Activated CD4-positive, alpha-beta memory T cell treated with anti-CD3 and anti-CD28 coated beads for 36 hours (primary cell): ENCODE measurements at regions of chr14 and their contacts with region 1.

Region 1: DNA sequence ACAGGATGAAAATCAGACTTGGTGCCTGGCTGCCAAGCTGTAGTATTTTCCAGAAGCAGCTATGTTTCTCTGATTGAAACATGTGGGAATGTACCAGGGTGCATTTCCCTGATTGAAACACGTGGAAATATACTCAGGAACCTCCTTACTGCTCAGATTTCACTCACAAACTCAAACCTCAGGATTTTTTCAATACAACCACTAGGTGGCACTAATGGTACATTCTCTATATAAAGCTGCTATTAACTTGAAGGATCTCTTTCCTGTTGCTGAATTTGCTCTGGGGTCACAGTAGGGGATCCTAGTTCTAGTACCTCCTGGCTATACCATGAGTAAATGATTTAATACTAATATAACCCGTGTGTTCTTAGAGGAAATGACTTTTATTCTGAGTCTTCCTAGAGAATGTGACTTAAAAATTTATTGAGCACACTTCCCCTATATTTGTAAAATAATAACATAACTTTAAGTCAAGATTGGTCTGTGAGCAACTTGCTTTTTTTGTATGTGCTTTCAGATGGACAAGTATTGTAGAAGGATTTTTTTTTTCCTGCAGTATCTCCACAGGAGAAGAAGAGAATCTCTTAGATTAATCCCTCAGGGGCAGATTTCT is 173.8 kb upstream of the MIS18BP1 start:
- DNase-seq: no peak
- H3K4me3 Mint-ChIP-seq: no peak overlapping the region
- H3K27ac Mint-ChIP-seq: no peak overlapping the region
- H3K4me1 Mint-ChIP-seq: no peaks in the 10 kb centered on the region
- H3K27me3 Mint-ChIP-seq: no peaks in the 10 kb centered on the region

Region 2: DNA sequence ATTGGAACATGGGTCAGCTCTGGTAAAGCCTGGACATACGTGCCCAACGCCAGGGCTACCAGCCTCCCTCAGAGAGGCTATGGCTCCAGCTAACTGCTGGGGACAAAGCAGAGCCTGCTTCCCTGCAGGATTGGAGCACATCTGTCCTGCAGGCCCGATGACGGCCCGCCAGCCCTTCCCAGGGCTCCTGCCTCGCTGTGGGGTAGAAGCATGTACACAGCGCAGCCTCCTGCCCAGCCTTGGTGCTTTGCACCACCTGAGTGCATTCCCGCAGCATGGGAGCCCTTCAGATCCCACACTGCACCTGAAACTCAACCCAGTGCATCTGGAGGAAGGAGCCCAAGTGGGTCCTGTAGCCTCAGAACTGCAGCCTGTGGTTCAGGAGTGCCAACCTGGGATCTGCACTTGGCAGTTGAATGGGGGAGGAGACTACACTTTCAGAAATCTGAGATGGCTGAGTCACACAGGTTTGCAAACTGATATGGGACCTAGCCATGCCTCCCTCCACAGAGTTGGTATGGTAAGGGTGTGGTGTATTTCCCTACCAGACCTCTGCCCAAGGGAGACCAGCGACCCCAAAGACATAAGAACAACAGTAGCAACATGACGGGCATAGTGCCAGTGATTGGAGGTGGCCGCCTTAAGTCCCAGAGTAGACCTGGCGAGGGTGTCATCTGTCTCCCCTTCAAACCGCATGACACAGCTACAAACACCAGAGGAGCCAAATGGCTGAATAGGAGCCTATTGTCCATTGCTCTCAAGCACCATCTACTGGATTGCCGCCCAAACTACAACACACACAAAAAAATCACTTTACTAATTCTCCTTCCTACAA is 100.2 kb after region 1 on chr14:
- CTCF ChIA-PET with region 1: no interaction called
- POLR2A ChIA-PET with region 1: no interaction called
- intact Hi-C with region 1: loop called (anchors 2 kb)
- DNase-seq: no peak
- H3K4me3 Mint-ChIP-seq: no peak overlapping the region
- H3K27ac Mint-ChIP-seq: no peak overlapping the region
- H3K4me1 Mint-ChIP-seq: no peaks in the 10 kb centered on the region
- H3K27me3 Mint-ChIP-seq: no peaks in the 10 kb centered on the region

Region 3: DNA sequence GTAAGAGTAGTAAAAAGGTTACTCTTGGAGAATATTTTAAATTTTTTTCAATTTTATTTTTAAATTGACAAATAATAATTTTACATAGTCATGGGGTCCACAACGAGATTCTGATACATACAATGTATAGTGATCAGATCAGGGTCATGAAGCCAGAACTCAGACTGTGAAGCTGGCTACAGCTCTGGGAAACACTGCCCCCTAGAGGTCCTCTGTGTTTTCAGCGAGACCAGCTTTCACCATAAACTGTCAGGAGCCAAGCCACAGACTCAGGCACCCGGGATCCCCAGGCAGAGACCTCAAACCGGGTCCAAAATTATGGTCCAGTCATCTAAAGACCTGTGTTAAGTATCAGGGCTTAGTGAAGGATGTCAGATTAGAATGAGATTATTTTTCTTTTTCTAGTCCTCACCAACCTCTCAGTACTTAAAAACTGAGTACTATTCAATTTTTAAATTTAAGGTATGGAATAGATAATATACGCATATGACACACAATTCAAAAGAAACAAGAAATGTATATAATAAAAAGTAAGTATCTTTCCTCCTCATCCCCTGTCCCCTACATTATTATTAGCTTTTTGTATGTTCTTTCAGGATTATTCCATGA is 1851.6 kb after region 1 on chr14:
- CTCF ChIA-PET with region 1: no interaction called
- POLR2A ChIA-PET with region 1: no interaction called
- intact Hi-C with region 1: loop called (anchors 5 kb)
- DNase-seq: peak; percentile 48
- H3K4me3 Mint-ChIP-seq: no peak overlapping the region
- H3K27ac Mint-ChIP-seq: no peak overlapping the region
- H3K4me1 Mint-ChIP-seq: no peaks in the 10 kb centered on the region
- H3K27me3 Mint-ChIP-seq: no peaks in the 10 kb centered on the region